SK-N-SH (cell line): ENCODE measurements at regions of chr1 and their contacts with region 1.

Region 1: DNA sequence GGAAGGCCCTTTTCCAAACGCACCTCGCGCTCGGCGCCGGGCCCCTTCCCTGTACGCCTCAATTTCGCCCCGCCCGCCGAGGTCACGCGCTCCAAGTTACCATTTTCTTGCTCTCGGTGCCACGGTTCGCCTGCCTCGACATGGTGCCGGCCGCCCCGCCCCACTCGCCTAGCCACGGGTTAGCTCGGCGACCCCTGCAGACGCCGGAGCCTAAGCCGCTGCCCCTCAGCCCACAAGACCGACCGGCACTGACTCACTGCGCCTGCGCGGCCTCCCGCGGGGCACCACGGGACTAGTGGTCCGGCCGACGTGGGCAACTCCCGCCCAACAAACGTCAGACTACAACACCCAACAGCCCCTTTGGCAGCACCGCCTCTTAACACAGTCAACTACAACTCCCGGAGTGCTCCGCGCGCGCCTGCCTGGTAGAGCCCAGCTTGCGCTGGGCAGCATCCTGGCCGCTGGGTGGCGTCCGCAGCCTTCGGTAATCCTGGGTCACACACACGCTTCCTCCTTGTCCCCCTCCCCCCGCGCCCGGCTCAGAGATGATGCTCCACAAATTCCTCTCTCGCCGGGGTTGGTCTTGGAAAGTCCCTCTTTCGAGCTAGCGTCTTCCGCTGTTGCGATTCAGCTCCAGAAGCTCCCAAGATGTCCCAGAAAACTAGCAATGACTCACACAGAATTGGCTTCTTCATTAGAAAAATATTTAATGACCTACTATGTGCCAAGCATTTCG is at the start of gene TRAPPC3:
- DNase-seq: peak; percentile 98
- H3K4me3 ChIP-seq: peak within 1 kb of the TSS; percentile 72 to 73
- H3K27ac ChIP-seq: peak within 1 kb of the TSS; percentile 97 to 98
- H3K4me1 ChIP-seq: peaks cover 24 to 25% of the 10 kb centered on the region in 2 experiments
- H3K27me3 ChIP-seq: no peaks in the 10 kb centered on the region
- CTCF ChIP-seq: peak; percentile 98
- EP300 ChIP-seq: peak in 1 of 2 experiments; percentile 69; a peak in 1 of 4 replicates
- RAD21 ChIP-seq: peak; percentile 98
- polyA plus RNA-seq, gene TRAPPC3: 149 and 169 TPM in 2 replicates

Region 2: DNA sequence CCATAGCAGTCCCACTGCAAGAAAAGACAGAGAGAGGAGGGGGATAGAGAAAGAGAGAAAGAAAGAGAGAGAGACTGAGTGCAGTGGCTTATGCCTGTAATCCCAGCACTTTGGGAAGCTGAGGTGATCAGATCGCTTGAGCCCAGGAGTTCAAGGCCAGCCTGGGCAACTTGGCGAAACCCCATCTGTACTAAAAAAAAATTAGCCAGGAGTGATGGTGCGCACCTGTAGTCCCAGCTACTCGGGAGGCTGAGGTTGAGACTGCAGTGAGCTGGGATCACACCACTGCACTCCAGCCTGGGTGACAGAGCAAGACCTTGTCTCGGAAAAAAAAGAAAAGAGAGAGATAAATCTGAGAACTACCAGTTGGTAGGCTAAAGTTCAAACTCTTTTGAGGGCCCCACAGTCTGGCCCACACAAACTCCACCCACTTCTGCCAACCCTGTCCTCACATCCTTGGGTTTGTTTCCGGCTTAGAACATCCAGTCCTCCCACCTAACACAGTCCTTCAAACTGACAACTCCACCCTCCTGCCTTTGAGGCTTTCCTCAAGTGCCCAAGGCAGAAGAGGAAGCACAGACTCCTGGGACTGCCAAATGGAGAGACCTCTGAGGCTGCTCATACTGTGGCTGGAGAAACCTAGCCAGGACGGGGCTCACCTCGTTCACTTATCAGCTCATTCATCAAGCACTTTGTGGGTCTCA is 556.3 kb before region 1 on chr1:
- CTCF ChIA-PET with region 1: no interaction called
- POLR2A ChIA-PET with region 1: no interaction called
- DNase-seq: no peak
- H3K4me3 ChIP-seq: no peak overlapping the region
- H3K27ac ChIP-seq: no peak overlapping the region
- H3K4me1 ChIP-seq: no peaks in the 10 kb centered on the region; a peak in 1 of 4 replicates
- H3K27me3 ChIP-seq: no peaks in the 10 kb centered on the region
- CTCF ChIP-seq: no peak
- EP300 ChIP-seq: no peak
- RAD21 ChIP-seq: no peak

Region 3: DNA sequence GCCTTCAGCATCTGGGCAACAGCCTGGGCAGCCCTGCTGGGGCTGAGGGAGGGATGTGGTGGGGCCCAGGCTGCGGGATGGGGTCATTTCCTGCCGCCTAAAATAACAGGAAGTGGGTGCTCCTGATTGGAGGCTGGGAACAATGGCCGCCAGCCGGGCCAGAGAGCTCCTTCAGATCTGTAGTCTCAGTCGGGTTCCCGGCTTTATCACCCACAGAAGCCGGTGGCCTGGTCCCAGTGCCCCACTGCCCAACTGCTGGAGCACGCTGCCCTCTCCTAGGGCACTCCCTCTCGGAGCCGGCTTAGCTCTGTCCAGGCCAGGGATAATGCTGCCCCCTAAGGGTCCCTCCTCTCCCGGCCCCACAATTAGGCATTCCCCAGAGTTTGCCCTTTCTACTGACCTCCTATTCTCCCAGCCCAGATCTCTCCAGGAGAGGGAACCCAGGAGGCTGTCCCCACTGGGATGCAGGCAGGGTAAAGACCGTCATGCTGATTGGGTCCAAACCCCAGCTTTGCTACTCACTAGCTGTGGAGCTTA is 11.6 kb after region 1 on chr1:
- CTCF ChIA-PET with region 1: interaction called, 49 read pairs
- POLR2A ChIA-PET with region 1: interaction called, 5 read pairs
- DNase-seq: peak; percentile 86
- H3K4me3 ChIP-seq: peak overlapping the region; percentile 47 to 72
- H3K27ac ChIP-seq: peak overlapping the region; percentile 81 to 83
- H3K4me1 ChIP-seq: peaks cover 31 to 44% of the 10 kb centered on the region in 2 experiments
- H3K27me3 ChIP-seq: no peaks in the 10 kb centered on the region
- CTCF ChIP-seq: peak; percentile 64
- EP300 ChIP-seq: no peak
- RAD21 ChIP-seq: peak; percentile 45

Region 4: GRCh38 chr1:36179220-36179600 is 29.8 kb after region 1 on chr1:
- CTCF ChIA-PET with region 1: interaction called, 19 read pairs
- POLR2A ChIA-PET with region 1: no interaction called
- DNase-seq: no peak
- H3K4me3 ChIP-seq: no peak overlapping the region
- H3K27ac ChIP-seq: no peak overlapping the region
- H3K4me1 ChIP-seq: peaks cover 0 to 6% of the 10 kb centered on the region in 2 experiments; a peak in 1 of 4 replicates
- H3K27me3 ChIP-seq: no peaks in the 10 kb centered on the region
- CTCF ChIP-seq: no peak
- EP300 ChIP-seq: no peak
- RAD21 ChIP-seq: no peak

Region 5: GRCh38 chr1:36199934-36200741 is 50.7 kb after region 1 on chr1:
- CTCF ChIA-PET with region 1: interaction called, 15 read pairs
- POLR2A ChIA-PET with region 1: no interaction called
- DNase-seq: no peak
- H3K4me3 ChIP-seq: no peak overlapping the region
- H3K27ac ChIP-seq: no peak overlapping the region
- H3K4me1 ChIP-seq: peaks cover 7 to 14% of the 10 kb centered on the region in 2 experiments; a peak in 1 of 4 replicates
- H3K27me3 ChIP-seq: no peaks in the 10 kb centered on the region
- CTCF ChIP-seq: no peak
- EP300 ChIP-seq: no peak
- RAD21 ChIP-seq: no peak

Region 6: DNA sequence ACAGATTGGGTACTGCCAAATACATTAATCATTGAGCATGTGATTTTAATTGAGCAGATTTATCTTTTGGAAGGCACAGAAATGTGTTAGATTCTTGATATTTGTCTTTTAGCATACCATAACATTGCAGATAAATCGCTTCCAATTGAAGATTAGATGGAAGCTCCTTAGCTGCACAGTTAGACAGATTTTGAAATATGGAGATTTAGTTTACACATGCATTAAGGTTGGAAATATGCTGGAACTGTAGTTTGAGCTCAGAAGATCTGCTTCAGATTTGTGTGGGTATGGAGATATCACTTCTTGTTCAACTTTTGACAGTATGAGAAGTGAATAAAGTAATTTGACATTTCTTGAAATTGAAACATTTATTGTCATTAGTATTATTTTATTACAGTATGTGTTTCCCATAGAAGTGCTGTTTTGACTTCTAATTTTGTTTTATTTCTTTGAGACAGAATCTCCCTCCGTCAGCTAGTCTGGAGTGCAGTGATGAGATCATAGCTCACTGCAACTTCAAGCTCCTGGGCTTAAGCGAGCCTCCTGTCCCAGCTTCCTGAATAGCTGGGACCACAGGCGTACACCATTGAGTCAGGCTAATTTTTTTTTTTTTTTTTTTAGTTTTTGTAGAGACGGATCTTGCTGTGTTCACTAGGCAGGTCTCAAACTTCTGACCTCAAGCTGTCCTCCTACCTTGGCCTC is 103.9 kb after region 1 on chr1:
- CTCF ChIA-PET with region 1: interaction called, 11 read pairs
- POLR2A ChIA-PET with region 1: no interaction called
- DNase-seq: no peak
- H3K4me3 ChIP-seq: no peak overlapping the region
- H3K27ac ChIP-seq: peak overlapping the region in 1 of 2 experiments; percentile 23; a peak in 2 of 4 replicates
- H3K4me1 ChIP-seq: peaks cover 2 to 16% of the 10 kb centered on the region in 2 experiments; a peak in 2 of 4 replicates
- H3K27me3 ChIP-seq: no peaks in the 10 kb centered on the region
- CTCF ChIP-seq: no peak
- EP300 ChIP-seq: no peak
- RAD21 ChIP-seq: no peak

Region 7: GRCh38 chr1:36300526-36300925 is 151.1 kb after region 1 on chr1:
- CTCF ChIA-PET with region 1: interaction called, 13 read pairs
- POLR2A ChIA-PET with region 1: no interaction called
- DNase-seq: no peak
- H3K4me3 ChIP-seq: no peak overlapping the region
- H3K27ac ChIP-seq: peak overlapping the region; percentile 48 to 76
- H3K4me1 ChIP-seq: peaks cover 2 to 12% of the 10 kb centered on the region in 2 experiments; a peak in 3 of 4 replicates
- H3K27me3 ChIP-seq: no peaks in the 10 kb centered on the region
- CTCF ChIP-seq: no peak
- EP300 ChIP-seq: no peak
- RAD21 ChIP-seq: no peak

Region 8: DNA sequence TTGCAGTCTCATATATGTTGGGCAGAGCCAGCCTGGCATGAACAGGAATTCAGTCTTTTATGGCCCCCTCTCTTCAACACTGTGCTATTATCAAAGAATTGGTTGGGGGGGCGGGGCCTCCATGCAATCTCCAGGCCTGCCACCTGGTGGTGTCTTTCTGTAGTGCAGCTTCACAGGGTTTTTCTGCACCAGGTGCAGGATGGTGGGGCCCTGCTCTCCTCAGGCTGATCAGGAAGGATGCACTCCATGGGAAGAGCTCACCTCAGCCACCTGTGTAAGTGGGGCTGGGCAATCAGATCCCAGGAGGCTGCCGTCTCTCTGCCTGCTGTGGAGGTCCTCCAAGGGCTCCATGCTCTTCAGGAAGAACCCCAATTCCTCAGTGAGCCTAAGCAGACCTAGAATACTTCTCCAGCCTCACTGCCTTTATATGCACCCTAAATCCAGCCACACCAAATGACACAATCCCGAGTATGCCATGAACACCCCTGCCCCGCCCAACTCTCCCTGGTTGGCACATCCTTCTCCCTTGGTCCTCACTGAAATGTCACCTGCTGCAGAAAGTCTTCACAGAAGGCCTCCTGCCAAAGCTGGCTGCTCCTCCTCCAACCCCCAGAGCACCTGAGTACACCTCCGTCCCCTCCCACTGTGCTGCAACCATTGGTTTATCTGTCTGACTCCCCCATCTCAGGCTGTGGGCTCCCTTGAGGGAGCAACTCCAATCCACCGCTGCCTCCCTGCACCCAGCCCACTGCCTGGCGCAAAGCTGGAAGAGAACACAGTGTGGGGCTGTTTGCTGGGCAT is 219.9 kb after region 1 on chr1:
- CTCF ChIA-PET with region 1: interaction called, 27 read pairs
- POLR2A ChIA-PET with region 1: no interaction called
- DNase-seq: peak; percentile 84
- H3K4me3 ChIP-seq: peak overlapping the region in 1 of 2 experiments; percentile 26; a peak in 1 of 4 replicates
- H3K27ac ChIP-seq: peak overlapping the region; percentile 5 to 99; a peak in 3 of 4 replicates
- H3K4me1 ChIP-seq: peaks cover 39 to 62% of the 10 kb centered on the region in 2 experiments
- H3K27me3 ChIP-seq: no peaks in the 10 kb centered on the region
- CTCF ChIP-seq: peak; percentile 85
- EP300 ChIP-seq: no peak
- RAD21 ChIP-seq: peak; percentile 72